ENCODE measurements at regions of chr16 and their contacts with region 1.

Region 1: GRCh38 chr16:74296432-74297144 is at the start of gene PSMD7:
- DNase-seq: peak; percentile 96 to 97
- H3K4me3 ChIP-seq: peak within 1 kb of the TSS; percentile 86
- H3K4me3 Mint-ChIP-seq: peak within 1 kb of the TSS; percentile 87
- H3K27ac Mint-ChIP-seq: peak within 1 kb of the TSS; percentile 93
- H3K4me1 ChIP-seq: peaks cover 10% of the 10 kb centered on the region
- H3K4me1 Mint-ChIP-seq: peaks cover 10% of the 10 kb centered on the region
- H3K27me3 ChIP-seq: no peaks in the 10 kb centered on the region
- H3K27me3 Mint-ChIP-seq: no peaks in the 10 kb centered on the region
- CTCF ChIP-seq: no peak
- total RNA-seq, gene PSMD7: 182 and 191 TPM in 2 replicates

Region 2: DNA sequence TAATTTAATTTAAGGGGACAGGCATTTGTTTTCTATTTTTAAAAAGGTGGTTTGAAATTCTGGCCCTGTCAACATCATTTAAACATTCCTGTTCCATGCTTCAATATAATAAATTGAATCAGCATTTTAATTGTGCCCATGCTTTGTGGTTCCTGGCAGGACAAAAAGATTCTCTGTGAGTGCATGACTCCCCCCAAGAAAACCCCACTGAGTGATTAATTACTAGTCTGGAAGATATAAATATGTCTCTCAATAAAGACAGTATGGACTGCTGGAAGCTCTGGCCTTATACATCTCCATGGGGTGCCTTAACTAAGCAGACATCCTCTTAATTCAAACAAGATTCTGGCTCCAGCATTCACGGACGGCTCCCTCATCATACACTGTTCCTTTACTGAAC is 95.0 kb before region 1 on chr16:
- CTCF ChIA-PET with region 1: no interaction called
- POLR2A ChIA-PET with region 1: no interaction called
- intact Hi-C with region 1: no loop called
- DNase-seq: no peak
- H3K4me3 ChIP-seq: no peak overlapping the region
- H3K4me3 Mint-ChIP-seq: no peak overlapping the region
- H3K27ac Mint-ChIP-seq: no peak overlapping the region
- H3K4me1 ChIP-seq: no peaks in the 10 kb centered on the region
- H3K4me1 Mint-ChIP-seq: no peaks in the 10 kb centered on the region
- H3K27me3 ChIP-seq: no peaks in the 10 kb centered on the region
- H3K27me3 Mint-ChIP-seq: no peaks in the 10 kb centered on the region
- CTCF ChIP-seq: no peak

Region 3: GRCh38 chr16:74216319-74216718 is 80.3 kb before region 1 on chr16:
- CTCF ChIA-PET with region 1: no interaction called
- POLR2A ChIA-PET with region 1: no interaction called
- intact Hi-C with region 1: no loop called
- DNase-seq: no peak
- H3K4me3 ChIP-seq: no peak overlapping the region
- H3K4me3 Mint-ChIP-seq: no peak overlapping the region
- H3K27ac Mint-ChIP-seq: no peak overlapping the region
- H3K4me1 ChIP-seq: no peaks in the 10 kb centered on the region
- H3K4me1 Mint-ChIP-seq: no peaks in the 10 kb centered on the region
- H3K27me3 ChIP-seq: no peaks in the 10 kb centered on the region; the same call in 1 of the 2 replicates
- H3K27me3 Mint-ChIP-seq: peaks cover 24% of the 10 kb centered on the region
- CTCF ChIP-seq: no peak

Region 4: GRCh38 chr16:74257061-74257460 is 39.5 kb before region 1 on chr16:
- CTCF ChIA-PET with region 1: no interaction called
- POLR2A ChIA-PET with region 1: no interaction called
- intact Hi-C with region 1: no loop called
- DNase-seq: no peak
- H3K4me3 ChIP-seq: no peak overlapping the region
- H3K4me3 Mint-ChIP-seq: no peak overlapping the region
- H3K27ac Mint-ChIP-seq: no peak overlapping the region
- H3K4me1 ChIP-seq: no peaks in the 10 kb centered on the region
- H3K4me1 Mint-ChIP-seq: no peaks in the 10 kb centered on the region
- H3K27me3 ChIP-seq: no peaks in the 10 kb centered on the region; the same call in 1 of the 2 replicates
- H3K27me3 Mint-ChIP-seq: no peaks in the 10 kb centered on the region
- CTCF ChIP-seq: no peak

Region 5: DNA sequence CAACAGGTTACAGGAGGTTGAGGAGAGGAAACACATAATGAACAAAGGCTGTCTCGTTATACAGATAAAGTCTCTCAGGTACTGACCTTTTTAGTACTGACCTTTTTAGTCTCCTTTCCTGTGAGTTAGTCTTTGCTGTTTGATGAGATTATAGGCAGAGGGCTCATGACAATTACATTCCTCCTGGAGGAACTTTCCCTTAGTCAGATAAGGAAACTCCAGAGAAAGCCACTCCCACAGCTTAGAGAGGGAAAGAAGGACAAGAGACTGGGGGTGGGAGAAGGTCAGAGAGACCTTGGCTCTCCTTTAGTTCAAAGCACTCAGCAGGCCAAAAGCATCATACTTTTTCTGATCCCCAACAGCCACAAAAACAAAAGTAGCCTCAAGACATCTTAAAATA is 15.3 kb before region 1 on chr16:
- CTCF ChIA-PET with region 1: no interaction called
- POLR2A ChIA-PET with region 1: no interaction called
- intact Hi-C with region 1: loop called (anchors 1 kb)
- DNase-seq: peak; percentile 57 to 65
- H3K4me3 ChIP-seq: no peak overlapping the region
- H3K4me3 Mint-ChIP-seq: no peak overlapping the region
- H3K27ac Mint-ChIP-seq: peak overlapping the region; percentile 53
- H3K4me1 ChIP-seq: peaks cover 26% of the 10 kb centered on the region
- H3K4me1 Mint-ChIP-seq: peaks cover 8% of the 10 kb centered on the region
- H3K27me3 ChIP-seq: no peaks in the 10 kb centered on the region
- H3K27me3 Mint-ChIP-seq: peaks cover under 1% of the 10 kb centered on the region
- CTCF ChIP-seq: no peak